ENCODE measurements at regions of chr1 and their contacts with region 1.

Region 1: GRCh38 chr1:23539698-23540266 is 8.7 kb upstream of the E2F2 start:
- DNase-seq: peak; percentile 73 to 93 (median 91)
- ATAC-seq: peak; percentile 98
- H3K4me3 ChIP-seq: no peak overlapping the region
- H3K4me3 Mint-ChIP-seq: peak overlapping the region in 9 of 10 donors; percentile 35 to 66 (median 53)
- H3K27ac ChIP-seq: no peak overlapping the region
- H3K27ac Mint-ChIP-seq: peak overlapping the region; percentile 43 to 85 (median 73)
- H3K4me1 ChIP-seq: peaks cover 10 to 11% of the 10 kb centered on the region in 2 donors
- H3K4me1 Mint-ChIP-seq: peaks cover 3 to 23% (median 17%) of the 10 kb centered on the region in 7 donors
- H3K27me3 ChIP-seq: no peaks in the 10 kb centered on the region
- H3K27me3 Mint-ChIP-seq: no peaks in the 10 kb centered on the region

Region 2: GRCh38 chr1:23344111-23344986 is 195.4 kb before region 1 on chr1 and contains the start of gene HNRNPR:
- CTCF ChIA-PET with region 1: interaction called, 3 read pairs
- POLR2A ChIA-PET with region 1: no interaction called
- intact Hi-C with region 1: loop called in 1 of 2 experiments (anchors 10 kb)
- DNase-seq: peak; percentile 90 to 99 (median 97)
- ATAC-seq: peak; percentile 97
- H3K4me3 ChIP-seq: peak within 1 kb of the TSS; percentile 89
- H3K4me3 Mint-ChIP-seq: peak within 1 kb of the TSS; percentile 81 to 100 (median 94)
- H3K27ac ChIP-seq: peak within 1 kb of the TSS; percentile 83
- H3K27ac Mint-ChIP-seq: peak within 1 kb of the TSS; percentile 89 to 98 (median 97)
- H3K4me1 ChIP-seq: peaks cover 25 to 28% of the 10 kb centered on the region in 2 donors
- H3K4me1 Mint-ChIP-seq: peaks cover 34 to 47% (median 45%) of the 10 kb centered on the region in 7 donors
- H3K27me3 ChIP-seq: no peaks in the 10 kb centered on the region
- H3K27me3 Mint-ChIP-seq: no peaks in the 10 kb centered on the region
- total RNA-seq, gene HNRNPR: 97.4 to 235 (median 117) TPM

Region 3: GRCh38 chr1:23403735-23404486 is 135.9 kb before region 1 on chr1:
- CTCF ChIA-PET with region 1: no interaction called
- POLR2A ChIA-PET with region 1: no interaction called
- intact Hi-C with region 1: no loop called
- DNase-seq: peak; percentile 62 to 83 (median 73)
- ATAC-seq: peak; percentile 92
- H3K4me3 ChIP-seq: no peak overlapping the region
- H3K4me3 Mint-ChIP-seq: no peak overlapping the region
- H3K27ac ChIP-seq: no peak overlapping the region
- H3K27ac Mint-ChIP-seq: peak overlapping the region in 5 of 9 donors; percentile 16 to 76 (median 51)
- H3K4me1 ChIP-seq: peaks cover 4 to 9% of the 10 kb centered on the region in 2 donors
- H3K4me1 Mint-ChIP-seq: peaks cover 10 to 14% (median 12%) of the 10 kb centered on the region in 7 donors
- H3K27me3 ChIP-seq: no peaks in the 10 kb centered on the region
- H3K27me3 Mint-ChIP-seq: no peaks in the 10 kb centered on the region

Region 4: GRCh38 chr1:23496490-23497181 is 43.1 kb before region 1 on chr1:
- CTCF ChIA-PET with region 1: interaction called, 203 read pairs
- POLR2A ChIA-PET with region 1: interaction called, 11 read pairs
- intact Hi-C with region 1: loop called (anchors 1 kb)
- DNase-seq: no peak
- ATAC-seq: peak; percentile 31
- H3K4me3 ChIP-seq: no peak overlapping the region
- H3K4me3 Mint-ChIP-seq: no peak overlapping the region
- H3K27ac ChIP-seq: no peak overlapping the region
- H3K27ac Mint-ChIP-seq: no peak overlapping the region
- H3K4me1 ChIP-seq: no peaks in the 10 kb centered on the region
- H3K4me1 Mint-ChIP-seq: peaks cover 0 to 5% (median 0%) of the 10 kb centered on the region in 7 donors
- H3K27me3 ChIP-seq: no peaks in the 10 kb centered on the region
- H3K27me3 Mint-ChIP-seq: peaks cover 0 to 14% (median 0%) of the 10 kb centered on the region in 5 donors

Region 5: GRCh38 chr1:23591460-23592208 is 51.9 kb after region 1 on chr1:
- CTCF ChIA-PET with region 1: interaction called, 3 read pairs
- POLR2A ChIA-PET with region 1: no interaction called
- intact Hi-C with region 1: loop called in 1 of 2 experiments (anchors 2 kb)
- DNase-seq: peak in 1 of 9 donors; percentile 53
- ATAC-seq: peak; percentile 58
- H3K4me3 ChIP-seq: no peak overlapping the region
- H3K4me3 Mint-ChIP-seq: peak overlapping the region in 9 of 10 donors; percentile 9 to 75 (median 53)
- H3K27ac ChIP-seq: no peak overlapping the region
- H3K27ac Mint-ChIP-seq: peak overlapping the region; percentile 28 to 93 (median 77)
- H3K4me1 ChIP-seq: peaks cover 31 to 46% of the 10 kb centered on the region in 2 donors
- H3K4me1 Mint-ChIP-seq: peaks cover 42 to 83% (median 62%) of the 10 kb centered on the region in 7 donors
- H3K27me3 ChIP-seq: no peaks in the 10 kb centered on the region
- H3K27me3 Mint-ChIP-seq: no peaks in the 10 kb centered on the region

Region 6: GRCh38 chr1:23613191-23614031 is 73.6 kb after region 1 on chr1:
- CTCF ChIA-PET with region 1: interaction called, 14 read pairs
- POLR2A ChIA-PET with region 1: interaction called, 6 read pairs
- intact Hi-C with region 1: no loop called
- DNase-seq: peak in 8 of 9 donors; percentile 52 to 72 (median 64)
- ATAC-seq: peak; percentile 57
- H3K4me3 ChIP-seq: peak overlapping the region; percentile 14
- H3K4me3 Mint-ChIP-seq: peak overlapping the region; percentile 48 to 84 (median 71)
- H3K27ac ChIP-seq: peak overlapping the region; percentile 71
- H3K27ac Mint-ChIP-seq: peak overlapping the region; percentile 91 to 98 (median 96)
- H3K4me1 ChIP-seq: peaks cover 41 to 68% of the 10 kb centered on the region in 2 donors
- H3K4me1 Mint-ChIP-seq: peaks cover 45 to 88% (median 85%) of the 10 kb centered on the region in 7 donors
- H3K27me3 ChIP-seq: no peaks in the 10 kb centered on the region
- H3K27me3 Mint-ChIP-seq: peaks cover 0 to 2% (median 0%) of the 10 kb centered on the region in 5 donors

Region 7: GRCh38 chr1:23634842-23635651 is 95.3 kb after region 1 on chr1:
- CTCF ChIA-PET with region 1: interaction called, 643 read pairs
- POLR2A ChIA-PET with region 1: interaction called, 559 read pairs
- intact Hi-C with region 1: loop called (anchors 1 kb)
- DNase-seq: peak in 8 of 9 donors; percentile 48 to 80 (median 72)
- ATAC-seq: peak; percentile 91
- H3K4me3 ChIP-seq: peak overlapping the region; percentile 42
- H3K4me3 Mint-ChIP-seq: peak overlapping the region; percentile 64 to 81 (median 75)
- H3K27ac ChIP-seq: peak overlapping the region; percentile 69
- H3K27ac Mint-ChIP-seq: peak overlapping the region; percentile 69 to 97 (median 93)
- H3K4me1 ChIP-seq: peaks cover 0 to 14% of the 10 kb centered on the region in 2 donors
- H3K4me1 Mint-ChIP-seq: peaks cover 18 to 52% (median 40%) of the 10 kb centered on the region in 7 donors
- H3K27me3 ChIP-seq: no peaks in the 10 kb centered on the region
- H3K27me3 Mint-ChIP-seq: peaks cover 0 to 4% (median 0%) of the 10 kb centered on the region in 5 donors

Measured in naive thymus-derived CD4-positive, alpha-beta T cell (primary cell).